ENCODE measurements at regions of chr17 and their contacts with region 1.

Region 1: GRCh38 chr17:74961657-74962490 is 10.7 kb downstream of the HID1 start:
- DNase-seq: peak; percentile 87
- ATAC-seq: peak; percentile 82
- H3K4me3 Mint-ChIP-seq: no peak overlapping the region
- H3K27ac Mint-ChIP-seq: no peak overlapping the region
- H3K4me1 Mint-ChIP-seq: peaks cover 7% of the 10 kb centered on the region
- H3K27me3 Mint-ChIP-seq: no peaks in the 10 kb centered on the region

Region 2: DNA sequence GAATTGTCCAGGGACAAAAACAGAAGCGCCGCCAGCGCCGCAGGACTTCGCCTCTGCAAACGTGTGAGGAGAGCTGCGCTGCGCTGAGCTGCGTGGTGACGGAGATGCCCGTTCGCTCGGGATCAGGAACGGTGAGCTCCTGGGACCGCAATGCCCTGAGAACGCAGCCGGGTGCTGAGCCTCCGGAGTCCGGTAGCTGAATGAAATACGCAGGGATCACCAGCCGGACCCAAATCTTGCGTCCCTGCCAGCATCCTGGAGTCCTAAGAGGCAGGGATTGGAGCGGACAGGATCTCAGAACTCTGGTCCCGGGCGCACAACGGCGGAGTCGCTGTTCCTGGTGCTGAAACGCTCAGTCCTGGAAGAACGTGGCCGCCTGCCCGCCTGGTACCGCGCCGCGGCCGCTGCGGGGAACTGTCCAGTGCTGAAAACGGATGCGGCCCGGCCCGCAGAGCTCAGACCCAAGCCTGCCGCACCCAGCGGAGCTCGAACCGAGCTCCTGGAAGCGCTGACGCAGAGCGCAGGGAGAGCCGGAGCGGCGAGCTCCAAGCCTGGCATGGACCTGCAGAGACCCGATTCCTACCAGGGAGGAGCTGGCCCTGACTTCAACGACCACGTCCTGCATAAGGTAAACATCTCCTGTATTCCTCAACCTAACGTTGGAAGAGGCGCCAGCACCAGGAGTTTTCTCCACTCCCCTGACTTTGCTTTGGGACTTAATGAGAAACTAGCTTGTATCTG is 290.7 kb before region 1 on chr17:
- CTCF ChIA-PET with region 1: no interaction called
- DNase-seq: peak; percentile 82
- ATAC-seq: peak; percentile 89
- H3K4me3 Mint-ChIP-seq: no peak overlapping the region
- H3K27ac Mint-ChIP-seq: no peak overlapping the region
- H3K4me1 Mint-ChIP-seq: no peaks in the 10 kb centered on the region
- H3K27me3 Mint-ChIP-seq: peaks cover 76% of the 10 kb centered on the region

Region 3: DNA sequence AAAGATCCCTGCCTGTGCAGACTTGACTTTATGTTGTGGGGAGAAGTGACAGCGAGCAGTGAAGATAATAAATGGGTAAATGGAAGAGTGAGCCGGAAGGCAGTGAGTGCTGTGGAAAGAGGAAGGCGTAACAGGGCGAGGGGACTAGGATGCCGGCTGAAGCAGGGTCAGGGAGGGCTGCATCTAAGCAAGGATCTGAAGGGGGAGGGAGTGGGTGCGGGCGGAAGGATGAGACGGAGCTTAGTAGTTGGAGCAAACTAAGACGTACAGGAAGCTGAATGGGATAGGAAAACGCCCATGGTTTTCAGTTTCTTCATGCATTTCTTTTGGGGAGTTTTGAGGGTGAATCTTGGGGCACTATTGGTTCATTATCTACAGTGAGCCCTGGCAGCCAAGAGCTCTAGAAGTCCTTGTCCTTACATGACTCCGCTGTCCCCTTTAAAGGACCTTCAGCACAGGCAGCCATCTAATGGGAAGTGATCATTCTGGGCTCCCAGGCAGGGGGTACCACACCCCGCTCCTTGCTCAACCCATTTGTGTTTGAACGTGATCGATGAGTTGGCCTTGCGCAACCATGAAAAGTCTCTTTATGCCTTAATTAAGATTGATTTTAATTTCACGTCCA is 175.3 kb before region 1 on chr17:
- CTCF ChIA-PET with region 1: interaction called, 15 read pairs
- DNase-seq: no peak
- ATAC-seq: no peak
- H3K4me3 Mint-ChIP-seq: no peak overlapping the region
- H3K27ac Mint-ChIP-seq: peak overlapping the region; percentile 2
- H3K4me1 Mint-ChIP-seq: peaks cover 45% of the 10 kb centered on the region
- H3K27me3 Mint-ChIP-seq: no peaks in the 10 kb centered on the region

Region 4: DNA sequence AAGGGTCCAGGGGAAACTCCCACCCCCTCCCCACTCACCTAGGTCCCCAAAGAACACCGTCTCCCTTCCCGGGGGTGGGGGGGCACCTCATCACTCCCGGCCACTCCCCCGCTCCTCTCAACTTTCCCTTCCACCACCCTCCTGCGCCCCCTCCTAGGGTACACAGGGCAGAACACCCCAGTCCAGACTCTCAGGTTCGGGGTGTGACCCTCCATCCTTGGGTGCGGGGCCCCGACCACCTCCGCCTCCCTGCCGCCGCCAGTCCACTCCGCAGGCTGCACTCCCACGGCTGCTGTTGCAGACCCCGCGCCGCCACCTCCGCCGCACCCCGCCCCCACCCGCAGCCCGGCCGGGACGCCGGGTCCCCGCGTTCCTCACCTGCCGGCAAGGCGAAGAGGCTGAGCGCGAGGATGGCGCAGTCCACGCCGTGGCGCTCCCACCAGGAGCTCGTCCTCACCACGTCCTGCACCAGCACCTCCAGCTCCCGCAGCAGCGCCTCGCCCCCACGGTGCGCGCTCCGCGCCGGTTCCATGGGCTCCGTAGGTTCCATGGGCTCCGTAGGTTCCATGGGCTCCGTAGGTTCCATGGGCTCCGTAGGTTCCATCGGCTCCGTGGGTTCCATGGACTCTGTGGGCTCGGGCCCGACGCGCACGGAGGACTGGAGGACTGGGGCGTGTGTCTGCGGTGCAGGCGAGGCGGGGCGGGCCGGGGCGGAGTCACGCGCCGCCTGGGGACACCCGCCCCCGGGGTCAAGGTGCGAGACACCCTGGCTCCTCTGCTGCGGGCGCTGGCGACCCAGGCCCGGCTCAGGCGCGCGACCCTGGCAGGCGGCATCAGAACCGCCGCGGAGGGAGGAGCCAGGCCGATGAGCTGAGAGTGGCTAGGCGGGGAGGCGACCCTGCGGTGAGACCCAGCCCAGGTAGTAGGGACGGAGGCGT is 68.6 kb before region 1 on chr17 and contains the start of gene FADS6:
- CTCF ChIA-PET with region 1: no interaction called
- DNase-seq: no peak
- ATAC-seq: peak; percentile 47
- H3K4me3 Mint-ChIP-seq: no peak within 1 kb of the TSS
- H3K27ac Mint-ChIP-seq: no peak within 1 kb of the TSS
- H3K4me1 Mint-ChIP-seq: peaks cover 1% of the 10 kb centered on the region
- H3K27me3 Mint-ChIP-seq: peaks cover 59% of the 10 kb centered on the region
- total RNA-seq, gene FADS6: not detected

Region 5: DNA sequence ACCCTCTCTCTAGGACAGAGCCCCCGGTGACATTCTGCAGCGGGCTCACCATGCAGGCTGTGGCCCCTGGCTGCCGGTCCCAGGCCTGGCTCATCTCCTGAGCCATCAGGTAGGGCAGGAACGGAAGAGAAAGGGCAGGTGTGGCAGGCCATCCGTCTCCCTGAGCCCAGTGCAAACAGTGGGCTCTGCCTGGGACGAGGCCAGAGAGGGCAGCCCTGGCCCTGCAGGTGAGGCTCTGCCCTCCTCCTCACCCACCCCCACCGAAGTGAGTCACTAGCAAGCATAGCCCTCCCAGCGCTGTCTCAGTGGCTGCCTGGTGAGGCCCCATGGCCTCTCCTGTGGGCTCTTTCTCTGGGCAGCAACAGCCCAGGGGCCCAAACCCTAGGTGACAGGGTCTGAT is 11.7 kb before region 1 on chr17:
- CTCF ChIA-PET with region 1: interaction called, 14 read pairs
- DNase-seq: no peak
- ATAC-seq: no peak
- H3K4me3 Mint-ChIP-seq: no peak overlapping the region
- H3K27ac Mint-ChIP-seq: no peak overlapping the region
- H3K4me1 Mint-ChIP-seq: peaks cover 5% of the 10 kb centered on the region
- H3K27me3 Mint-ChIP-seq: peaks cover 3% of the 10 kb centered on the region

Region 6: DNA sequence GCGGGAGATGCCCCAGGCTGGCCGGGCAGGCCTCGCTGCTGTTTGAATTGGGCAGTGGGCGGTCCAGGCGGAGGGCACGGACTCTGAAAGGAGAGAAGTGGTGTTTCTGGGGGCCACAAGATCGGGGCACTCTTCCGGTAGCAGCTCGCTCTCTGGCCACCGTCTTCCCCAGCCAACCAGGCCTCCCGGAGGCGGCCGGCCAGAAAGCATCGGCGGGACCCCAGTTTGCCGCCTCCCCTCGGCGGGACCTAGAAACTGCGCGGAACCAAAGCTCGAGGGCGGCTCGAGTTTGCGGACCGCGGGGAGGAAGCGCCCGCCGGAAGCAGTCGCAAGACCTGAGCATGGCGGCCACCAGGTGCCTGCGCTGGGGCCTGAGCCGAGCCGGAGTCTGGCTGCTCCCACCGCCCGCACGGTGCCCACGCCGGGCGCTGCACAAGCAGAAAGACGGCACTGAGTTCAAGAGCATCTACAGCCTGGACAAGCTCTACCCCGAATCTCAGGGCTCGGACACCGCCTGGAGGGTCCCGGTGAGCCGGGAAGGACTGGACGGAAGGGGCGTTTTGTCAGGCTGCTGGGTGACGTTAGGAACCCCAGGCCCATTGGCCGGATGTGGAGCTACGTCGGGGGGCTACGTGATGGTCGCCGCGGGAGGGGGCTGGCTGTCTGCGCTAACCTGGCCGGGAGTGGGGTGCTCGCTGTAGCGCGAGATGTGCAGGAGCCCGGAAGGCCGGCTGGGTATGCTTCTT is 50.6 kb after region 1 on chr17 and contains the start of gene MRPL58:
- CTCF ChIA-PET with region 1: interaction called, 129 read pairs
- DNase-seq: peak; percentile 92
- ATAC-seq: peak; percentile 95
- H3K4me3 Mint-ChIP-seq: peak within 1 kb of the TSS; percentile 95
- H3K27ac Mint-ChIP-seq: peak within 1 kb of the TSS; percentile 93
- H3K4me1 Mint-ChIP-seq: peaks cover 24% of the 10 kb centered on the region
- H3K27me3 Mint-ChIP-seq: peaks cover 2% of the 10 kb centered on the region
- total RNA-seq, gene MRPL58: 45.9 to 53.1 TPM

Region 7: GRCh38 chr17:75109407-75110233 is 147.7 kb after region 1 on chr17 and contains the start of gene ARMC7:
- CTCF ChIA-PET with region 1: interaction called, 35 read pairs
- DNase-seq: peak; percentile 93
- ATAC-seq: peak; percentile 88
- H3K4me3 Mint-ChIP-seq: peak within 1 kb of the TSS; percentile 88
- H3K27ac Mint-ChIP-seq: peak within 1 kb of the TSS; percentile 90
- H3K4me1 Mint-ChIP-seq: peaks cover 35% of the 10 kb centered on the region
- H3K27me3 Mint-ChIP-seq: no peaks in the 10 kb centered on the region
- total RNA-seq, gene ARMC7: 13.5 to 14.5 TPM

Region 8: GRCh38 chr17:75173526-75173925 is 211.7 kb after region 1 on chr17:
- CTCF ChIA-PET with region 1: interaction called, 17 read pairs
- DNase-seq: no peak
- ATAC-seq: no peak
- H3K4me3 Mint-ChIP-seq: no peak overlapping the region
- H3K27ac Mint-ChIP-seq: no peak overlapping the region
- H3K4me1 Mint-ChIP-seq: peaks cover 32% of the 10 kb centered on the region
- H3K27me3 Mint-ChIP-seq: no peaks in the 10 kb centered on the region

Region 9: GRCh38 chr17:75412455-75413317 is 450.8 kb after region 1 on chr17:
- CTCF ChIA-PET with region 1: interaction called, 22 read pairs
- DNase-seq: peak; percentile 83
- ATAC-seq: peak; percentile 90
- H3K4me3 Mint-ChIP-seq: peak overlapping the region; percentile 31
- H3K27ac Mint-ChIP-seq: peak overlapping the region; percentile 66
- H3K4me1 Mint-ChIP-seq: peaks cover 27% of the 10 kb centered on the region
- H3K27me3 Mint-ChIP-seq: peaks cover 16% of the 10 kb centered on the region

Measured in activated CD8-positive, alpha-beta memory T cell treated with anti-CD3 and anti-CD28 coated beads, Interleukin-2, amount 10 ng/mL, durations not matched to agents 7 days and 5 days (primary cell).